ENCODE measurements at regions of chr1 and their contacts with region 1.

Region 1: DNA sequence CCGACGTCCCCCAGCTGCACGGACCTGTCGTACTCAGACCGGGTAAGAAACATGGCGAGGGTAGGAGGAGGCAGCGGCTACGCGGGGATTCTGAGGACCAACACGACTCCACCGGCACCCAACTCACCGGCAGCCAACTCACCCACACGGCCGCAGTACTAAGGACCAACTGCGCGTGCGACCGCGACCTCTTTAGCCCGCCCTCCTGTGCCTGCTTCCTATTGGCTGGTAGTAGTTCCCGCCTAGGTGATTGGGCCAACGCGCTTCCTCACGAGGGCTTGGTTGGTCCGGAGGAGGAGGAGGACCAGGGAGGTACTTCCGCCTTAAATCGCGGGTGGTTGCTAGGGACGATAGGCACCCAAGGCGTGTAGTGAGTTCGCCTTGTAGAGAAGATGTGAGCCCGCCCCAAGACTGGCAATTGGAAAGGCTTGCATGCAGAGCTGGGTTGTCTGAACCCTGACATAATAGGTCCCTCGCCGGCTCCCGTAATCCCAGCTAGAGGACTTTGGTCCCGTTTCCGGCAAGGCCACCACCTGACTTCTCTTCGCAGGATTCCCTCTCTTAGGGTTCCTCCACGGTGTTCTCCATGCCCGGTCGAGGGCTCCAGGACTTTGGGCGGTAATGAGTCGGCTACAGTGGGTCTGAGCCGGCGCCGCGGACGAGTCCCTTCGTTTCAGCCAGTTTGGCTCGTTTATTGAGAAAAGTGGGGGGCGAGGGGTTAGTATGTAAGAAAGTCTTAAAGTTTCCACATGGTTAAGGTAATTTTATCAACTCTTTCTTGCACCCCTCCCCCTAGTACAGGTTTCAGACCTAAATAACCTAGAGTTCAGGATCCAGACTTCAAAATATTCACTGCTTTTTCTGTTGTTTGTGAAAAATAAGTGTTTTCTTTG is at the start of gene PSMA5:
- DNase-seq: peak; percentile 97
- H3K4me3 Mint-ChIP-seq: peak within 1 kb of the TSS; percentile 96
- H3K27ac Mint-ChIP-seq: peak within 1 kb of the TSS; percentile 99
- H3K4me1 Mint-ChIP-seq: peaks cover 35% of the 10 kb centered on the region
- H3K27me3 Mint-ChIP-seq: no peaks in the 10 kb centered on the region
- total RNA-seq, gene PSMA5: 170 to 189 TPM

Region 2: DNA sequence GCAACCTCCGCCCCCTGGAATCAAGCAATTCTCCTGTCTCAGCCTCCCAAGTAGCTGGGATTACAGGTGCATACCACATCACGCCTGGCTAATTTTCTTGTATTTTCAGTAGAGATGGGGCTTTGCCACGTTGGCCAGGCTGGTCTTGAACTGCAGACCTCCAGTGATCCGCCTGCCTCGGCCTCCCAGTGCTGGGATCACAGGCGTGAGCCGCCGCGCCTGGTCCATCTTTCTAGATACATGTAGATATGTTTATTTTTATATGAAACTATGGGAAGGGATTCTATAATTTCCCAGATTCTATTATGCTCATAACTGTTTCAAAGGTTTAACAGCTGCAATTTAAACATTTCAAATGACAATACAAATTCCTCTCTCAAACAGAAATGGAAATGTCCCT is 490.4 kb before region 1 on chr1:
- CTCF ChIA-PET with region 1: no interaction called
- POLR2A ChIA-PET with region 1: no interaction called
- DNase-seq: no peak
- H3K4me3 Mint-ChIP-seq: no peak overlapping the region
- H3K27ac Mint-ChIP-seq: no peak overlapping the region
- H3K4me1 Mint-ChIP-seq: no peaks in the 10 kb centered on the region
- H3K27me3 Mint-ChIP-seq: no peaks in the 10 kb centered on the region

Region 3: DNA sequence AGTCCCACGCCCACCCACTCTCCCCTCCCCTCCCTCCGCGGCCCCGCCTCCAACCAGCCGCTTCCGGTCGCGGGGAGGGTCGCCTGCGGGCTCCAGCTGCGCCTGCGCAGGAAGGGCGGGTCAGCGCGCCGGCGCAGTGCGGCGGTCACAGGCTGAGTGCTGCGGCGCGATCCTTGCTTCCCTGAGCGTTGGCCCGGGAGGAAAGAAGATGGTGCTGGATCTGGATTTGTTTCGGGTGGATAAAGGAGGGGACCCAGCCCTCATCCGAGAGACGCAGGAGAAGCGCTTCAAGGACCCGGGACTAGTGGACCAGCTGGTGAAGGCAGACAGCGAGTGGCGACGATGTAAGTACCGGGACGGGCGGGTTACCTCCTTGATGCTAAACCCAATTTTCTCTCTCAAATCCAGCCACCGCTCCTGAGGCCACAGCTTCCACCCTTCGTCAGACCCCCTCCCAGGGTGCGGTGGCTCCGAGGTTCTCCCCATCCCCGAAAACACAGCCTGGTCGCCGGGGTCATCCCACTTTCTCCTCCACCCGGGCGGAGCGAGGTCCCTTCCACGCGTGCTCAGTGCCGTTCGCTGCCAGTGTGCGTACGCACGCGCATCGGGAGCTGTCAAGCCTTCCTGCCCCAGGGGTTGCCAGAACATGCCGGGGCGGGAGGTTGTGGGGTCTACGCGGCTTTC is 212.6 kb before region 1 on chr1 and contains the start of gene SARS1:
- CTCF ChIA-PET with region 1: no interaction called
- POLR2A ChIA-PET with region 1: interaction called, 15 read pairs
- DNase-seq: peak; percentile 90
- H3K4me3 Mint-ChIP-seq: peak within 1 kb of the TSS; percentile 98
- H3K27ac Mint-ChIP-seq: peak within 1 kb of the TSS; percentile 87
- H3K4me1 Mint-ChIP-seq: peaks cover 36% of the 10 kb centered on the region
- H3K27me3 Mint-ChIP-seq: peaks cover 7% of the 10 kb centered on the region
- total RNA-seq, gene SARS1: 193 to 195 TPM

Region 4: GRCh38 chr1:109282952-109283747 is 143.4 kb before region 1 on chr1 and contains the start of gene PSRC1:
- CTCF ChIA-PET with region 1: interaction called, 6 read pairs
- POLR2A ChIA-PET with region 1: interaction called, 27 read pairs
- DNase-seq: peak; percentile 92
- H3K4me3 Mint-ChIP-seq: peak within 1 kb of the TSS; percentile 99
- H3K27ac Mint-ChIP-seq: peak within 1 kb of the TSS; percentile 85
- H3K4me1 Mint-ChIP-seq: peaks cover 33% of the 10 kb centered on the region
- H3K27me3 Mint-ChIP-seq: peaks cover 3% of the 10 kb centered on the region
- total RNA-seq, gene PSRC1: 27.0 to 28.7 TPM

Region 5: DNA sequence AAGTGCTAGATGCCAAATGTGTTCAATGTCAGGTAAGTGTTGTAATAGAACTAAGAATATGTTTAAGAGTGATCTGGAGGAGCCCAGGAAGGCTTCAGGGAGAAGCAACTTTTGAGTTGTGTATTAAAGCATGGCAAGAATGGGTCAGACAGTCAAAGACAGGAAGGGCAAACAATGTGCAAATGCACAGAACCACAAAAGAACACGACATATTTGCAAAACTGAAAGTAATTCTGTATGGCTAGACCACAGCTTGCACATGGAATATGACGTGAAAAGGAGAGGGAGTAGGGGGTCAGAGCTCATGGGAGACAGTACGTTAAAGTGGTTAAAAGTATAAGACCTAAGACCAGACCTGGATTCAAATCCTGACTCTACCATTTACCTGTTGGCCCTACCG is 21.7 kb before region 1 on chr1:
- CTCF ChIA-PET with region 1: no interaction called
- POLR2A ChIA-PET with region 1: interaction called, 31 read pairs
- DNase-seq: peak; percentile 20
- H3K4me3 Mint-ChIP-seq: no peak overlapping the region
- H3K27ac Mint-ChIP-seq: peak overlapping the region; percentile 67
- H3K4me1 Mint-ChIP-seq: peaks cover 18% of the 10 kb centered on the region
- H3K27me3 Mint-ChIP-seq: no peaks in the 10 kb centered on the region

Region 6: DNA sequence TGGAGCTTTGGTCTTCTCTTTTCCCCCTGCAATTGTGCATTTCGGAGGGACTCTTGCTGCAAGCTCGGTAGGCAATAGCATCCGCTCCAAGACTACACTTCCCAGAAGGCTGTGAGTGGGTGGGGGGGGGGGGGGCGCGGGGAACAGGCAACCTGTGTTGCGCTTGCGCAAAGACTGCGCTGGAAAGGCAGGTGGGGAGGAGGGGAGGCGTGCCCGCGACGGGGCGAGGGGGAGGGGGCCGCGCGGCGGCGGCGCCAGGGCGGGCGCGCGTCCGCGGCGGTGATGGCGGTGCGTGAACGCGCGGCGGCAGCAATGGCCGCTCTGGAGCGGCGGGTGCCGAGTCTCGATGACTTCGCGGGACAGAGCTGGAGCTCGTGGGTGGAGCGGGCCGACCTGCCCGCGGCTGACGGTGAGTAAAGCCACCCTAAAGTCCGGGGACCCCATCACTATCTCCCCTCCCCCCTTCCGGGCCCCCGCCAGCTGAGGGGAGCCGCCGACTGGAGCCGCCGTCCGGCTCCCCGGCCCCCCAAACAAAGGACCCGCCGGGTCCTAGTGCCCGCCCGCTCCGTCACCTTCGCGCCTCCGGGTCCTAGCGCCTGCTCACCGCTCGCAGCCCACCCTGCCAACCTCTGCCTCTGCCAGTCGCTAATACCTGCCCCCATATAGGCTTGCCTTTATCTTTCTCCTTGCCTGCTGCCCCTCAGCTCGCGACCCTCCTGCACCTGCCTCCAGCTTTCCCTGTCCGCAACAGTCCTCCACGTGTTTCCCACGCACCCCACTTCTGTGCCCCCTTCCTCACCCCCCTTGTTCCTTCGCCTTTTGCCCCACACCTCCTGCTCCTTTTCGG is 57.4 kb after region 1 on chr1 and contains the start of gene ATXN7L2:
- CTCF ChIA-PET with region 1: interaction called, 4 read pairs
- POLR2A ChIA-PET with region 1: interaction called, 78 read pairs
- DNase-seq: peak; percentile 94
- H3K4me3 Mint-ChIP-seq: peak within 1 kb of the TSS; percentile 93
- H3K27ac Mint-ChIP-seq: peak within 1 kb of the TSS; percentile 79
- H3K4me1 Mint-ChIP-seq: peaks cover 36% of the 10 kb centered on the region
- H3K27me3 Mint-ChIP-seq: peaks cover 17% of the 10 kb centered on the region
- total RNA-seq, gene ATXN7L2: 7.0 to 7.6 TPM

Region 7: GRCh38 chr1:109499661-109500536 is 73.4 kb after region 1 on chr1:
- CTCF ChIA-PET with region 1: interaction called, 3 read pairs
- POLR2A ChIA-PET with region 1: interaction called, 20 read pairs
- DNase-seq: peak; percentile 54
- H3K4me3 Mint-ChIP-seq: no peak overlapping the region
- H3K27ac Mint-ChIP-seq: peak overlapping the region; percentile 47
- H3K4me1 Mint-ChIP-seq: peaks cover 85% of the 10 kb centered on the region
- H3K27me3 Mint-ChIP-seq: no peaks in the 10 kb centered on the region

Region 8: DNA sequence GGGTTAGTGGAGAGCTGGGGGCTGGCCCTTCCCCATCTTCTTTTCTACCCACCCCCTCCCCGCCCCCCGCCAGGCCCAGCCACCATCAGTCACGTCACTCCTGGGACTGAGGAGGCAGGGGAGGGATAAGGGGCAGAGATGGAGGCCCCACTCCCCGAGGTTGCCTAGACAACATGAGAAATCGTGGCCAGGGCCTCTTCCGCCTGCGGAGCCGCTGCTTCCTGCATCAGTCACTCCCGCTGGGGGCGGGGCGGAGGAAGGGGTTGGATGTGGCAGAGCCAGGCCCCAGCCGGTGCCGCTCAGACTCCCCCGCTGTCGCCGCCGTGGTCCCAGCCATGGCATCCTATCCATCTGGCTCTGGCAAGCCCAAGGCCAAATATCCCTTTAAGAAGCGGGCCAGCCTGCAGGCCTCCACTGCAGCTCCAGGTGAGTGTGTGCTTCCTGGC is 194.3 kb after region 1 on chr1:
- CTCF ChIA-PET with region 1: no interaction called
- POLR2A ChIA-PET with region 1: interaction called, 10 read pairs
- DNase-seq: peak; percentile 97
- H3K4me3 Mint-ChIP-seq: peak overlapping the region; percentile 97
- H3K27ac Mint-ChIP-seq: peak overlapping the region; percentile 93
- H3K4me1 Mint-ChIP-seq: peaks cover 77% of the 10 kb centered on the region
- H3K27me3 Mint-ChIP-seq: no peaks in the 10 kb centered on the region